ENCODE measurements at regions of chr17 and their contacts with region 1.

Region 1: GRCh38 chr17:29219378-29220047 is 27.1 kb upstream of the CRYBA1 start:
- DNase-seq: peak; percentile 91
- H3K4me3 ChIP-seq: no peak overlapping the region
- H3K27ac ChIP-seq: no peak overlapping the region
- H3K4me1 ChIP-seq: peaks cover 5% of the 10 kb centered on the region
- H3K27me3 ChIP-seq: no peaks in the 10 kb centered on the region
- CTCF ChIP-seq: peak; percentile 96

Region 2: DNA sequence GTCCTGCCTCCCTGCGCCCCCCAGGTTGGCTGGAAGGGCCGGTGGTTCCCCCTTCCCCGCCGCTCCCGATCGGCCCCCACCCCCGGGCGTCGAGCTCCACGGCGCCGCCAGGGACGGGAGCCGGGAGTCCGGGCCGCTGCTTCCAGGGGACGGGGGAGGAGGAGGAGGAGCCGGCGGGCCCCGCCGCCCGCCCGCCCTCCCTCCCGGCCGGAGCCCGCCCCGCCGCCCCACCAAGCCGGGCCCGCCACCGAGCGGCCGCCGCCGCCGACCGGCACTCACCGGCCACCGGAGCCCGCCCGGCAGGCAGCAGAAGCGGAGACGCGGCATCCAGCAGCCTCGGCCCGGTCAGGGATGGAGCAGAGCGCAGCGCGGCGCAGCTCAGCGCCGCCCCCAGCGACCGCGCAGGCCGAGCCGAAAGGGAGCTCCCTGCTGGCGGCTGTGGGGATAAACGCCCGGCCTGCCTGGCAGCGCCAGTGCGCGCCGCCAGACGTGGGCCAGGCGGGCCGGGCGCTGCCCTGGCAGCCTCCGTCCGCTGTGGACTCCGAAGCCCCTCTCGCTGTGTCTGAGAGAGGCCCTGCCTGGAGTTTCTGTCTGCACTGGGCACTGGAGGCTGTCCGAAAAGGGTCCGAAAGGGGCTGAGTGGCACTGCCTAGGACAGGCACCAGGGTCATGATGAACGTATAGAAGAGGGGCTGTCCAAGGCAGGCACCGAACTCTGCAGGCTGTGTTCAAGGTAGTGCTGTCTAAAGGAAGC is 39.3 kb before region 1 on chr17 and contains the start of gene MYO18A:
- CTCF ChIA-PET with region 1: interaction called, 3 read pairs
- POLR2A ChIA-PET with region 1: interaction called, 19 read pairs
- intact Hi-C with region 1: no loop called
- DNase-seq: peak; percentile 85
- H3K4me3 ChIP-seq: peak within 1 kb of the TSS; percentile 63
- H3K27ac ChIP-seq: peak within 1 kb of the TSS; percentile 72
- H3K4me1 ChIP-seq: peaks cover 22% of the 10 kb centered on the region
- H3K27me3 ChIP-seq: no peaks in the 10 kb centered on the region
- CTCF ChIP-seq: peak; percentile 73
- total RNA-seq, gene MYO18A: 26.6 and 36.6 TPM in 2 replicates

Region 3: GRCh38 chr17:29273924-29274323 is 54.4 kb after region 1 on chr17:
- CTCF ChIA-PET with region 1: no interaction called
- POLR2A ChIA-PET with region 1: no interaction called
- intact Hi-C with region 1: no loop called
- DNase-seq: no peak
- H3K4me3 ChIP-seq: no peak overlapping the region
- H3K27ac ChIP-seq: no peak overlapping the region
- H3K4me1 ChIP-seq: no peaks in the 10 kb centered on the region
- H3K27me3 ChIP-seq: no peaks in the 10 kb centered on the region
- CTCF ChIP-seq: no peak

Measured in A673 (cell line).